Activated T-helper 2 cell treated with anti-CD3 and anti-CD28 coated beads, Interferon-gamma antibody, Interleukin-2, Interleukin-4, amounts not matched to agents 10 μg/mL and 5 μg/mL and 100 μg/mL, durations not matched to agents 14 hours and 24 hours and 36 hours (primary cell): ENCODE measurements at regions of chr4 and their contacts with region 1.

Region 1: GRCh38 chr4:150242820-150243458 is 164.7 kb downstream of the DCLK2 start:
- DNase-seq: no peak
- H3K4me3 Mint-ChIP-seq: no peak overlapping the region
- H3K27ac Mint-ChIP-seq: no peak overlapping the region
- H3K4me1 Mint-ChIP-seq: no peaks in the 10 kb centered on the region
- H3K27me3 Mint-ChIP-seq: no peaks in the 10 kb centered on the region

Region 2: GRCh38 chr4:149980941-149981340 is 262.0 kb before region 1 on chr4:
- intact Hi-C with region 1: loop called (anchors 2 kb)
- DNase-seq: no peak
- H3K4me3 Mint-ChIP-seq: no peak overlapping the region
- H3K27ac Mint-ChIP-seq: no peak overlapping the region
- H3K4me1 Mint-ChIP-seq: peaks cover 6% of the 10 kb centered on the region
- H3K27me3 Mint-ChIP-seq: peaks cover 6% of the 10 kb centered on the region

Region 3: DNA sequence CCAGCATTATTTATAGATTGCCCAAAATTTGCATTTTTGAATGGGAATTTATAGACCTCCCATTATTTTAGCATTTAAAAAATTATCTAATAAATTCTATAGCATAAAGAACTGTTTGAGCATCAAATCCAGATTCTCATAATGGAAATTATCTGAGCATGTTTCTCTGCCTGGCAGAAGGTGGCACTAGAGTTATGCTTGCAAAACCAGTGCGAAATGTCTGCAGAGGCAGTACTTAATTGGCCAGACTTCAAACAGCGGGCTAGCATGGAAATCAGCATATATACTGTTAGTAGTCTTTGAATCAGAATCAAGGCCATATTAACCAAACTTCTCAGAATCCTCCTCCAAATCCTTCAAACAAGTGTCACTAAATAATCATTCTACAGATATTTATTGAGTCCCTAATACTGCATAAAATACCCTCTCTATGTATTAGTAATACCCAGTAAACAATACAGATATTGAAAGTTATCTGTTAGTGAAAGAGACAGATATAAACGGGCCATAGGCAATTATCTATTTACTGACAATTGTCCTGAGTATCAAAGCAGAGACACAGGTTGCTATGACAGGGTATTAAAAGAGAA is 243.4 kb before region 1 on chr4:
- intact Hi-C with region 1: loop called (anchors 1 kb)
- DNase-seq: no peak
- H3K4me3 Mint-ChIP-seq: no peak overlapping the region
- H3K27ac Mint-ChIP-seq: no peak overlapping the region
- H3K4me1 Mint-ChIP-seq: peaks cover 3% of the 10 kb centered on the region
- H3K27me3 Mint-ChIP-seq: peaks cover 14% of the 10 kb centered on the region

Region 4: GRCh38 chr4:150010525-150011126 is 232.3 kb before region 1 on chr4:
- intact Hi-C with region 1: loop called (anchors 5 kb)
- DNase-seq: no peak
- H3K4me3 Mint-ChIP-seq: no peak overlapping the region
- H3K27ac Mint-ChIP-seq: no peak overlapping the region
- H3K4me1 Mint-ChIP-seq: peaks cover 3% of the 10 kb centered on the region
- H3K27me3 Mint-ChIP-seq: peaks cover 10% of the 10 kb centered on the region

Region 5: GRCh38 chr4:150256841-150257730 is 14.1 kb after region 1 on chr4:
- intact Hi-C with region 1: no loop called
- DNase-seq: no peak
- H3K4me3 Mint-ChIP-seq: no peak overlapping the region
- H3K27ac Mint-ChIP-seq: no peak overlapping the region
- H3K4me1 Mint-ChIP-seq: no peaks in the 10 kb centered on the region
- H3K27me3 Mint-ChIP-seq: no peaks in the 10 kb centered on the region

Region 6: GRCh38 chr4:150280081-150280895 is 37.3 kb after region 1 on chr4:
- intact Hi-C with region 1: no loop called
- DNase-seq: no peak
- H3K4me3 Mint-ChIP-seq: no peak overlapping the region
- H3K27ac Mint-ChIP-seq: no peak overlapping the region
- H3K4me1 Mint-ChIP-seq: peaks cover 8% of the 10 kb centered on the region
- H3K27me3 Mint-ChIP-seq: no peaks in the 10 kb centered on the region